ENCODE measurements at regions of chr12 and their contacts with region 1.

Region 1: DNA sequence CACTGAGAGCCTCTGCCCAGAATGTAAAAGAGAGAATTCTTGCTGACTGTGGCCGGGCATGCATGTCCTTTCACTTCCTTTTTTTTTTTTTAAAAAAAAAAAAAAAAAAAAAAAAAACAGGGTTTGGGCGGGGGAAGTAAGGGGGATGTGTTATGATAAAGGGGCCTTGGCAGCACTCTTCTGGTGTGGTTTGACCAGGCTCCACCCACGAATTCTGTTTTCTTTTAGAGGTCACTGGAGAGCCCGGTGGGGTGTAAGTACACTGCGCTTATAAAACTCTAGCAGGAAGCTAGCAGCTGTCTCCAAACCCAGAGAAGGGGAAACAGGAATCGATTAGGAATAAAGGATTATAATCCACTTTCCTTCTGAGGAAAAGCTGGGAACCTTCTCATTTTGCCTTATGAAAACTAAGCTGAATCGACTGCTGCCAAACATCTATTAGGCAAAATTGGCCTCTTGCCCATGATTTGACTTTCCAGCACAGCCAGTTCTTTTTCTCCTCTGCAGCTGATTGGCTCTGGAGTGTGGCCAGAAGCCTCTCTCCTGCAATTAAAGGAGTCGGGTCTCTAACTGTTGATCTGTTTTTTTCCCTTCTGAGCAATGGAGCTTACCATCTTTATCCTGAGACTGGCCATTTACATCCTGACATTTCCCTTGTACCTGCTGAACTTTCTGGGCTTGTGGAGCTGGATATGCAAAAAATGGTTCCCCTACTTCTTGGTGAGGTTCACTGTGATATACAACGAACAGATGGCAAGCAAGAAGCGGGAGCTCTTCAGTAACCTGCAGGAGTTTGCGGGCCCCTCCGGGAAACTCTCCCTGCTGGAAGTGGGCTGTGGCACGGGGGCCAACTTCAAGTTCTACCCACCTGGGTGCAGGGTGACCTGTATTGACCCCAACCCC is 27.7 kb upstream of the HIGD1C start:
- DNase-seq: peak; percentile 88 to 95
- ATAC-seq: peak; percentile 77

Region 2: GRCh38 chr12:50763639-50764285 is 160.9 kb before region 1 on chr12 and contains the start of gene ATF1:
- intact Hi-C with region 1: loop called in 1 of 2 experiments (anchors 10 kb)
- DNase-seq: peak; percentile 91 to 92
- ATAC-seq: peak; percentile 83
- total RNA-seq, gene ATF1: 35.8 to 36.4 TPM

Region 3: GRCh38 chr12:51103977-51104376 is 179.3 kb after region 1 on chr12:
- intact Hi-C with region 1: no loop called
- DNase-seq: no peak
- ATAC-seq: no peak

Measured in left colon (tissue), 2 donors.